Ascending aorta (tissue), 2 donors: ENCODE measurements at regions of chr3 and their contacts with region 1.

Region 1: DNA sequence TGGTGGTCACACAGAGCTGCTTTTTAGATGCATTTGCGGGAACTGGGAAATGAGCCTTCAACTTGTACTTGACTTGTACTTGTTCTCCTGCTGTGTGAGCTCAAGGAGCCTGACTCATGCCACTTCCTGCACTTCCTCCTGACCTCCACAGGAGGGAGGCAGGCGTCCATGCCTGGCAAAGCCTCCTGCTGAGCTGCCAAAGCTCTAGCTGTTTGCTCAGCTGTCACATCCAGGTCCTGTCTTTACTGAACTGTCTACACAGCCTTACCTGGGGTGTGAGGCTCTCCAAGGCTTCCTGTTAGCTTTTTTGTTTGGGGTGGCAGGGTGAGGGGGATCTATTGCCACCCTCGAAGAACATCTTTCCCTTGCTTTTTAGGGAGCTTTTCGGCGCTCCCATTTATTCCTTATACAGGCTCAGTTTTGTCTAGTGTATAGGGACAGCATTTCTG is 6.4 kb downstream of the THPO start:
- DNase-seq: peak in 1 of 2 donors; percentile 89
- H3K4me3 ChIP-seq: no peak overlapping the region
- H3K27ac ChIP-seq: peak overlapping the region in 1 of 2 donors; percentile 80
- H3K4me1 ChIP-seq: peaks cover 14 to 22% of the 10 kb centered on the region in 2 donors
- H3K27me3 ChIP-seq: no peaks in the 10 kb centered on the region
- CTCF ChIP-seq: peak; percentile 87 to 94 (median 91)

Region 2: DNA sequence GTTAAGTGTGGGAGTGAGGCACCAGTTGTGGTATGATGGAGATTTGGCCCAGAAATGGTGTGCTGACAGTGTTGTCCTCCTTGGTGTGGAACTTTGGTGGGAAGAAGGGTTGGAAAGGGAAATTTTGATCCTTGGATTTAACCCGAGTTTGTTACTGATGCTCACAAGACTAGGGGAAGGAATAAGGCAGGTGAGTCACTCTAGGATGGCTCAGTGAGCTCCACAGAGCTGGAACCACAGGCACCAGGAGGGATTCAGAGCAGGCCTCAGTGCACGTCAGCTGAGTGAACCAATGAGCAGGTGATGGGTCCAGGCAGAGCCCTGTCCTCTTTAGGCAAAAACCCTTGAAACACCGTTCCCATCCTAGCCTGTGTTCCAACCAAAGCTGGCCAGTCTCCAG is 19.7 kb after region 1 on chr3:
- intact Hi-C with region 1: no loop called
- DNase-seq: no peak
- H3K4me3 ChIP-seq: no peak overlapping the region
- H3K27ac ChIP-seq: no peak overlapping the region
- H3K4me1 ChIP-seq: no peaks in the 10 kb centered on the region
- H3K27me3 ChIP-seq: no peaks in the 10 kb centered on the region
- CTCF ChIP-seq: no peak

Region 3: GRCh38 chr3:184417619-184418327 is 46.2 kb after region 1 on chr3:
- intact Hi-C with region 1: loop called (anchors 5 kb)
- DNase-seq: peak in 1 of 2 donors; percentile 72
- H3K4me3 ChIP-seq: no peak overlapping the region
- H3K27ac ChIP-seq: no peak overlapping the region
- H3K4me1 ChIP-seq: no peaks in the 10 kb centered on the region
- H3K27me3 ChIP-seq: no peaks in the 10 kb centered on the region
- CTCF ChIP-seq: peak; percentile 70 to 86 (median 71)

Region 4: DNA sequence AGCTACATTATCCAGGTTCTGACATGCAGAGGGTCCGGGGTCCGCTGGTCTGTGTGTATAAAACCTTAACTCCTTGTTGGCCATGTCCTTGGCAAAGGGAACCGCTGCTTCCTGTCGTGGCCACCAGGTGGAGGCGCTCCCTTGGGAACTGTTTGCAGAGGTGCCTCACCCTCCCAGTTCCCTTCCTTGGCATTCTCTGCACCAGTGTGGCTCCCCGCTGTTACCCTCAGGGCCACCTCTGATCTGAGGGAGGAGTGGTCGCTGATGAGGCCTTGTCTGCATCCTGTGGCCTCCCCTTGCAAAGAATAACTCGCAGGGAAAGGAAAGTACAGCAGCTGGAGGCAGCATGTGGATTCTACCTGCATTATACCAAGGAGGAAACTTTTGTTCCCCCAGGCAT is 97.8 kb after region 1 on chr3:
- intact Hi-C with region 1: loop called (anchors 5 kb)
- DNase-seq: no peak
- H3K4me3 ChIP-seq: no peak overlapping the region
- H3K27ac ChIP-seq: no peak overlapping the region
- H3K4me1 ChIP-seq: no peaks in the 10 kb centered on the region
- H3K27me3 ChIP-seq: no peaks in the 10 kb centered on the region
- CTCF ChIP-seq: peak in 2 of 3 experiments; percentile 22 to 23

Region 5: GRCh38 chr3:184513276-184514170 is 141.9 kb after region 1 on chr3:
- intact Hi-C with region 1: loop called (anchors 1 kb)
- DNase-seq: peak in 1 of 2 donors; percentile 90
- H3K4me3 ChIP-seq: peak overlapping the region; percentile 53 to 65
- H3K27ac ChIP-seq: no peak overlapping the region
- H3K4me1 ChIP-seq: peaks cover 0 to 5% of the 10 kb centered on the region in 2 donors
- H3K27me3 ChIP-seq: no peaks in the 10 kb centered on the region
- CTCF ChIP-seq: peak; percentile 77 to 92 (median 84)

Region 6: GRCh38 chr3:184543843-184544512 is 172.4 kb after region 1 on chr3:
- intact Hi-C with region 1: loop called (anchors 1 kb)
- DNase-seq: peak in 1 of 2 donors; percentile 85
- H3K4me3 ChIP-seq: no peak overlapping the region
- H3K27ac ChIP-seq: no peak overlapping the region
- H3K4me1 ChIP-seq: no peaks in the 10 kb centered on the region
- H3K27me3 ChIP-seq: no peaks in the 10 kb centered on the region
- CTCF ChIP-seq: peak; percentile 83 to 95 (median 87)

Region 7: DNA sequence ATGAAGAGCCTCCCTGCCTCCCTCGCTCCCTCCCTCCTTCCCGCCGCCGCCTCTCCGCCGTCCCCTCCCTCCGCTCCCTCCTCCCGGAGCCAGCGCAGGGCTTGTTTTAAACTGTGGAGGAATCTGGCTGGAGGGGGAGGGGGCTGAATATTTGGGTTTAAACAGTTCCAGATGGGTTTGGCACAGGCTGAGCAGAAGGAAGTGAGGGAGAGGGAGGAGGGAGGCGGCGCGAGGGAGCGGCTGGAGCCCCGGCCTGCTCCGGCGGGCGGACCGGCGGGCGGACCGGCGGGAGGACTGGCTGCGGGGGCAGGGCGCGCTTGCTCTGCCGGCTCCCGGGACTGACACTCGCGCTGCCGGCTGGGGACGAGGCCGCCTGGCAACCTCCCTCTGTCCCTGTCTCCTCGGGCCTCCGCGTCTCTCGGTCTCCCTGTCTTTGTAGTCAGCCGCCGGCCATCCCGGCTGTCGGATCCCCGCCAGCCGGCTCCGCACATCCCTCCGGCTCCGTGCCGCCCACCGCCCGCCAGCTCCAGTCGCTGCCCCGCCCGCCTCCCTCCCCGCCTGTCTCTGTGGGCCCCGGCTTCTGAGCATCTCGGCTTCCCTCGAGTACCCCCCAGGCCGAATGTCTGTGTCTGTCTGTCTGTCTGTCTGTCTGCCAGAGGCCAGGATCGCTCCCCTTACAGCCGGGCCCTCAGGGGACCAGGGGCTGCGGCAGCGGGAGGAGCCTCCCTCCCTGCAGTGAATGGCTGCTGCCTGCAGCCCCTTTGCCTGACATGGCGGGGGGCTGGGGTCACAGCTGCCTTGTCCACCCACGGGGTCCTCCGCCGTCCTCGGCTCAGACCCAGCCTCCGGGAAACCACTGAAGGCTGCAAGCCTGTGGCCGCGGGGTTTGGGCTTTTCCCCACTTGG is 197.6 kb after region 1 on chr3:
- intact Hi-C with region 1: no loop called
- DNase-seq: peak in 1 of 2 donors; percentile 88
- H3K4me3 ChIP-seq: peak overlapping the region; percentile 44 to 77
- H3K27ac ChIP-seq: peak overlapping the region; percentile 58 to 70
- H3K4me1 ChIP-seq: peaks cover 0 to 10% of the 10 kb centered on the region in 2 donors
- H3K27me3 ChIP-seq: no peaks in the 10 kb centered on the region
- CTCF ChIP-seq: no peak

Region 8: DNA sequence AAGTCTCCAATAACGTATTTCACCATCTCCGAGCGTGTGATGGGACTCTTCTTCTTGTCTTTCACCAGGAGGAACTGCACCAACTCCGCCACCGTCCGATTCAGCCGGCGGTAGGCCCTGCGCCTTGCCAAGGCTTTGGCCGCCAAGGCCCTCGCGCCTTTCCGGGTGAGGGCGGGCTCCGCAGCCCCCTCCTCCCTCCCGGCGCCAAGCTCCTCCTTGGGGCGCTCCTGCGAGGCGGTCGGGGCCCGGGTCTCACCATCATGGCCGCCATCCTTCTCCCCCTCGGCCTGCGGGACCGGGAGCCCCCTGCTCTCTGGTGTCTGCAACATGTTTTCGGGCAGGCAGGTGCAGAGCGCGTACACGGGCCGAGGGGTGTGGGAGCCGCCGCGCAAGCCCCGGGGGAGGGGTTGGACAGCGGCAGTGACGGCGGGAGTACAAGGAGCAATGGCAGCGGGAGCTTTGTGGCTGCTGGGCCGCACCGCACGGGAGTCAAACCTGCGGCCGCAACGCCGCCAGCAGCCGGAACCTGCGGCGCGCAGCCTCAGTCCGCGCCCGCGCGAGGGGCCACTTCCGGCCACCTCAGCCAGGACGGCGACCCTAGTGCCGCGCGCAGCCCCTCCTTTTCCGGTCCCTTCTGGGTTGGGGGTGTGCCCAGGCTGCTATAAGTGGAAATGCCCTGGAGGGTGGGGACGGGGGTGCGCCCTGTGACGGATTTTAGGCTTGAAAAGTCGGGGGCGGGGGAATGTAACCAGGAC is 340.1 kb after region 1 on chr3 and contains the start of gene MAGEF1:
- intact Hi-C with region 1: loop called (anchors 5 kb)
- DNase-seq: peak; percentile 15 to 91
- H3K4me3 ChIP-seq: peak within 1 kb of the TSS; percentile 94 to 96
- H3K27ac ChIP-seq: peak within 1 kb of the TSS; percentile 92 to 96
- H3K4me1 ChIP-seq: peaks cover 3 to 11% of the 10 kb centered on the region in 2 donors
- H3K27me3 ChIP-seq: no peaks in the 10 kb centered on the region
- CTCF ChIP-seq: no peak
- total RNA-seq, gene MAGEF1: 5.2 TPM